Lower leg skin (tissue), 4 donors: ENCODE measurements at regions of chr5 and their contacts with region 1.

Region 1: DNA sequence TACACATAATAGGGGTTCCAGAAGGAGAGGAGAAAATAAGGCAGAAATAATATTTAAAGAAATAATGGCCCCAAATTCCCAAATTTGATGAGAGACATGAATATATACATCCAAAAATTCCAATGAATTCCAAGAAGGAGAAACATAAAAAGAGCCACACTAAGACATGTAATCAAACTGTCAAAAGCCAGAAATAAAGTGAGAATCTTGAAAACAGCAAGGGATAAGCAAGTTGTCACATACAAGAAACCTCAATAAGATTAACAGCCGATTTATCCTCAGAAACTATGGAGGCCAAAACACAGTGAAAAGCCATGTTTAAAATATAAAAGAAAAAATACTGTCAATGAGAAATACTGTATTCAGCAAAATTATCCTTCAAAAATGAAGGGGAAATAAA is 14.5 kb downstream of the CATSPER3 start:
- DNase-seq: no peak
- H3K4me3 ChIP-seq: no peak overlapping the region
- CTCF ChIP-seq: no peak
- POLR2A ChIP-seq: no peak

Region 2: DNA sequence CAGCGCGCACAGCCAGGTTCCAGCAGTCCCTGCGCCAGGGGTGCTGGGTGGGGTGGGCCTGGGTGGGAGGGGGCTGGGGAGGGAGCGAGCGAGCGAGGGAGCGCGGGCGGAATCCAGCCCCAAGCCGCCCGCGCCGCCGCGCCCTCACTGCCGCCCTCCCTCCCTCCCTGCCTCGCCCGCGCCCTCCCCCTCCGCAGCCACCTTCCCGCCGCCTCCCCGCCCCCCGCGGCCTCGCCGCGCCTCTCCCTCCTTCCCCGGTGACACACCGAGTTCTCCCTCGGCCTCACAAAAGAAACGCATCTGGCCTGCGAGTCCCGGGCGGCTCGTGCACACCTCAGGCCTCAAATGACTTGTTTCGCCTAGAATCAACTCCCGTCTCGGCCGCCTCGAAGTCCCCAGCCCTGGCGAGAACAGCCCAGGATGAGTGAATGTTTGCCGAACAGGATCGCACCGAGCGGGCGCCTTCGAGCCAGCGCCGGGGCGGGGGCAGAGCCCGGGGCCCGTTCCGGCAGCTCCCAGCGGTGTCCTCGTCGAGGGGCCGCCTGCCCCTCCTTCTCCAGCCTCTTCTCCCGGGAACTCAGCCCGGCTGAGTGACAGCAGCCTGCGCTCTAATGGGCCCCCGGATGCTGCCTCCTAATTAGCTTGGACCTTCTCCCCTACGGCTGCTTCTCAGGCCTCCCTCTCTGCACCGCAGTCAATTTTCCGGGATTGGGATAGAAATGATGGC is 52.2 kb after region 1 on chr5:
- intact Hi-C with region 1: no loop called
- DNase-seq: no peak
- H3K4me3 ChIP-seq: no peak overlapping the region
- CTCF ChIP-seq: no peak
- POLR2A ChIP-seq: no peak

Region 3: DNA sequence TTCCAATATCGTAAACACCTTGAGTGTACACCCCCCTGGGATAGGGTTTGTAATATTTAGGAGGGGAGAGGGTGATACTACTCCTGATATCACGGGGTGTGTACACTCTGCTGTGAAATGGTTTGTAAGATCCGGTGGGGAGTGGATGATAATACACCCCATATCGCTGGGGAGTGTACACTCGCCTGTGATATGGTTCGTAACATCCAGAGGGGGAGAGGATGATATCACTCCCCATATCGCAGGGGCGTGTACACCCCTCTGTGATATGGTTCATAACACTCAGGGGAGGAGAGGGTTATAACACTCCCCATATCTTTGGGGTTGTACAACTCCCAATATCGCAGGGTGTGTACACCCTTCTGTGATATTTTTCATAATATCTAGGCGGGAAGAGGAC is 818.4 kb after region 1 on chr5:
- intact Hi-C with region 1: loop called (anchors 5 kb)
- DNase-seq: no peak
- H3K4me3 ChIP-seq: no peak overlapping the region
- CTCF ChIP-seq: no peak
- POLR2A ChIP-seq: no peak